A673 (cell line): ENCODE measurements at regions of chr12 and their contacts with region 1.

Region 1: DNA sequence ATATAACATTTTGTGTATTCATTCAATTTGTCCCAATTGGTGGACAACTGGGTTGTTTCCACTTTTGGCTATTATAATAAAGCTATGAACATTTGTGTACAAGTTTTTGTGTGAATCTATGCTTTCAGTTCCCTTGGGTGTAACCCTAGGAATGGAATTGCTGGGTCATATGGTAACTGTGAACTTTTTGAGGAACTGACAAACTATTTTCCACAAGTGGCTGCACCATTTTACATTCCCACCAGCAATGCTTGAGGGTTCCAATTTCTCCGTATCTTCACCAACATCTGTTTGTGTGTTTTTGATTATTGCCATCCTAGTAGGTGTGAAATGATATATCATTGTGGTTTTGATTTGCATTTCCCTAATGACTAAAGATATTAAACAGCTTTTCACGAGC is 13.0 kb downstream of the LPCAT3 start:
- DNase-seq: no peak
- H3K4me3 ChIP-seq: no peak overlapping the region
- H3K27ac ChIP-seq: no peak overlapping the region
- H3K4me1 ChIP-seq: peaks cover 14% of the 10 kb centered on the region
- H3K27me3 ChIP-seq: no peaks in the 10 kb centered on the region
- CTCF ChIP-seq: no peak

Region 2: DNA sequence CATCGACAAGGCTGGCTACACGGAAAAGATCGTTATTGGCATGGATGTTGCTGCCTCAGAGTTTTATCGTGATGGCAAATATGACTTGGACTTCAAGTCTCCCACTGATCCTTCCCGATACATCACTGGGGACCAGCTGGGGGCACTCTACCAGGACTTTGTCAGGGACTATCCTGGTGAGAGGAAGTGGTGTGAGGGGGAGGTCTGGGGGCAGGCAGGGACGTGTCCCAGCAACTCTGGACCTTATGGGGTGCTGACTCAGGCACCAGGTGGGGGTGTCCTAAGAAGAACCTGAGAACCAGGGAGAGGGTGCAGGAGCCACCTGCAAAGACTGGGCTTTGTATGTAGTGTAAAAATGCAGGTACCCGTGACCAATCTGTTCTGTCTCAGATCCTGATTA is 85.7 kb before region 1 on chr12:
- CTCF ChIA-PET with region 1: no interaction called
- POLR2A ChIA-PET with region 1: interaction called, 24 read pairs
- intact Hi-C with region 1: no loop called
- DNase-seq: no peak
- H3K4me3 ChIP-seq: no peak overlapping the region
- H3K27ac ChIP-seq: peak overlapping the region; percentile 23
- H3K4me1 ChIP-seq: peaks cover 11% of the 10 kb centered on the region
- H3K27me3 ChIP-seq: no peaks in the 10 kb centered on the region
- CTCF ChIP-seq: peak; percentile 17; the same call in 1 of the 2 replicates

Region 3: DNA sequence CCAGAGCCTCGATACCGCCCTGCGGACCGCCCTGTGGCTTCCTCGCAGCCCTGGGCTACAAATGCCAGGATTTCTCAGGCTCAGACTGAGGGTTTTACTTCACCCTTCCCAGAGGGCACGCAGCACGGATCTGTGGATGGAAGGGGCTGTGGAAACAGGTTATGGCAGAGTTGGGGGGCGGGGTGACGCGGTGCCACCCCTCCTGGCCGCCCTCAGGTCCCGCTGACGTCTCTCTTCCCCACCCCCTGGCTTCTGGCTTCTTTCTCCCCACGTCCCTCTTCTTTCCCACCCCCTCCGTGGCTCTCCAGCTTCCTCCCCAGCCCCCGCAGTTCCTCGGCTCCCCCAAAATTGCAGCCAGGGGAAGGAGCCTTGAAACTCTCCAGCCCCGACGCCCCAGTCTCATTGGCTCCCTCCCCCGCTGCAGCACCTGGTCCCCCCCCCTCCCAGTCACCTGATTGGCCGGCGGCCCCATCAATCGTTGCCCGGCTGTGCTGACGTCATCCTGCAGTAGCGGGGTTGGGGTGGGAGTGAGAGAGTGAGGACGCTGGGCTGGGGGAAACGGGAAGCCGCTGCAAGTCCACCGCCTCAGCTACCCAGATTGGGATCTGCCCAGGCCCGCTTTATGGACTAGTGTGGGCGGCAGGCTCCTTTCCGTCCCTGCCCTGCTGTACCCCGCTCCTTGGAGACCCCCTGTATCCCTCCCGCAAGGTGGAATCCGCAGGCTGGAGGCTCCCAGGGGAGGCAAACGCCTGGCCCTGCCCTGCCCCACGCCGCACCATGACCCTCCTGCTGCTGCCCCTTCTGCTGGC is 124.8 kb after region 1 on chr12 and contains the start of gene CLSTN3:
- CTCF ChIA-PET with region 1: no interaction called
- POLR2A ChIA-PET with region 1: no interaction called
- intact Hi-C with region 1: no loop called
- DNase-seq: peak; percentile 86
- H3K4me3 ChIP-seq: peak within 1 kb of the TSS; percentile 59
- H3K27ac ChIP-seq: peak within 1 kb of the TSS; percentile 58
- H3K4me1 ChIP-seq: no peaks in the 10 kb centered on the region
- H3K27me3 ChIP-seq: no peaks in the 10 kb centered on the region
- CTCF ChIP-seq: no peak
- total RNA-seq, gene CLSTN3: 10.7 and 12.1 TPM in 2 replicates

Region 4: GRCh38 chr12:7142056-7142644 is 136.8 kb after region 1 on chr12:
- CTCF ChIA-PET with region 1: no interaction called
- POLR2A ChIA-PET with region 1: interaction called, 15 read pairs
- intact Hi-C with region 1: no loop called
- DNase-seq: peak; percentile 80
- H3K4me3 ChIP-seq: no peak overlapping the region
- H3K27ac ChIP-seq: no peak overlapping the region
- H3K4me1 ChIP-seq: no peaks in the 10 kb centered on the region
- H3K27me3 ChIP-seq: no peaks in the 10 kb centered on the region
- CTCF ChIP-seq: peak; percentile 85